Ascending aorta (tissue), 2 donors: ENCODE measurements at regions of chr4 and their contacts with region 1.

Region 1: DNA sequence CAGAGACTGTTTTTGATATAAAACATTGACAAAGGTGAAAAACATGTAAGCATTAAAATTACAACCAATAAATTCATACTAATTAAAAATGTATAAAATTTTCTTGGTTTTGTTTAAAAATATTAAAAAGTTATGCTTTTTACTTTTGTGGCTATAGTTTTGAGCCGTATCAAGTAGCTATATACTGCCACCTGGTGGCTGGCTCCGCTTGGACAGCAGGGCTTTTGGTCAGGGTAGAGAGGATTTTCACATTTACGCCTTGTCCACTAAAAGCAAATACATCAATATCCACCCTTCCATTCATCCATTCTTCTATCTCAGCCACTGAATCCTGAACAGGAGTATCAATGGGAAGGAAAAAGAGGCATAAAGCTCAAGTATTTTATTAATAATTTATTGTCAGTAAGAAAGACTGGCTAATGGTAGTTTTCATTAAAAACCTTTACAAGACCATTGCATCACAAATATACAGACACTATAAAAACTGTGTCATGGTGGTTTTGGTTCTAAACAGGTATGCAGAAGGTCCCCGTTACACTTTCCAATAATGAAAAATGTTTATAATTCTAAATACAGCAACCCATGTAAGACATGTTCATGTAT is 32.1 kb upstream of the MTNR1A start:
- DNase-seq: peak in 1 of 2 donors; percentile 86
- H3K4me3 ChIP-seq: no peak overlapping the region
- H3K27ac ChIP-seq: no peak overlapping the region
- H3K4me1 ChIP-seq: peaks cover 0 to 3% of the 10 kb centered on the region in 2 donors
- H3K27me3 ChIP-seq: no peaks in the 10 kb centered on the region
- CTCF ChIP-seq: peak; percentile 52 to 88 (median 86)

Region 2: GRCh38 chr4:184994010-184994622 is 1593.4 kb before region 1 on chr4:
- intact Hi-C with region 1: no loop called
- DNase-seq: no peak
- H3K4me3 ChIP-seq: no peak overlapping the region
- H3K27ac ChIP-seq: no peak overlapping the region
- H3K4me1 ChIP-seq: no peaks in the 10 kb centered on the region
- H3K27me3 ChIP-seq: no peaks in the 10 kb centered on the region
- CTCF ChIP-seq: no peak

Region 3: GRCh38 chr4:186297013-186297645 is 290.4 kb before region 1 on chr4:
- intact Hi-C with region 1: loop called (anchors 2 kb)
- DNase-seq: no peak
- H3K4me3 ChIP-seq: no peak overlapping the region
- H3K27ac ChIP-seq: no peak overlapping the region
- H3K4me1 ChIP-seq: no peaks in the 10 kb centered on the region
- H3K27me3 ChIP-seq: no peaks in the 10 kb centered on the region
- CTCF ChIP-seq: peak; percentile 20 to 58 (median 39)

Region 4: DNA sequence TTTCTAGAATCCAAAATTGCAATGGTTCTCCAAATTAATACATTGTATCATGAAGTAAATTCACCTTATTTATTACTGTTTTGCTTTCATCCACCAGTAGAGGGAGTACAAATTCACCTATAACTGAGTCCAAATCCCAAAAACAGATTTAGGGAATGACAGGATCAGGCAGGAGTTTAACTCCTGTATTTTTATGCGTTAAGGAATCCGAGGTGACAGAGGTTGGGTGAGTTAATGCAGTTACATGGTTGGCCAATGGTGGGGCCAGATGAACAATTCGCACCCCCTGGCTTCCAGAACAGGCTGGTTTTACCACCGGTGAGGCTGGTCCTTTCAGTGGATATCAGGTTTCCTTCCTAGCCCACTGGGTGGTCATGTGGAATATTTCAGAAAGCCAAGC is 114.6 kb before region 1 on chr4:
- intact Hi-C with region 1: loop called (anchors 1 kb)
- DNase-seq: no peak
- H3K4me3 ChIP-seq: no peak overlapping the region
- H3K27ac ChIP-seq: no peak overlapping the region
- H3K4me1 ChIP-seq: no peaks in the 10 kb centered on the region
- H3K27me3 ChIP-seq: no peaks in the 10 kb centered on the region
- CTCF ChIP-seq: peak in 2 of 3 experiments; percentile 38 to 55

Region 5: DNA sequence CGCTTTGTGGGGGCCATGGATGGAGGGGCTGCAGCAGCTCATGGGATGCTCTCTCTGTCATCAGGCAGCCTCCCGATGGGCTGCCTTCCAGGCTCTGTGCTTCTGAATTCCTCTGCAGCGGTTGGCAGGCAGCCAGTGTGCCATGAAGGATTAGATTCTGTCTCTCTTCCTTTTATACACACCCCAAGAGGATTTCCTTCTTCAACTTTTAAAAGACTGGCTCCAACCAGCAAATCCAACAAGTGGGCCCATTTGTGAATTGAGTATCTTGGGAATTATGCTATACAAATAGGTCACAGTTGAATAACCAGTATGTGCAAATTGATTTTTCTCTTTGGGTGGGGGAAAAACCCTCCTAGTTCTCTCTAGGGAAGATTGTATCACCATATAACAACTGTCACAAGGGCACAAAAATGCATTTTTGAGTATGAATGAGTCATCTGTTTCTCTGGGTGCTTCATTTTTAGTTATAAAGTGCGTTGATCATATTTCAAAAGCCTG is 232.9 kb after region 1 on chr4:
- intact Hi-C with region 1: no loop called
- DNase-seq: no peak
- H3K4me3 ChIP-seq: no peak overlapping the region
- H3K27ac ChIP-seq: no peak overlapping the region
- H3K4me1 ChIP-seq: no peaks in the 10 kb centered on the region
- H3K27me3 ChIP-seq: no peaks in the 10 kb centered on the region
- CTCF ChIP-seq: no peak